Left cardiac atrium (tissue), 4 donors: ENCODE measurements at regions of chr9 and their contacts with region 1.

Region 1: DNA sequence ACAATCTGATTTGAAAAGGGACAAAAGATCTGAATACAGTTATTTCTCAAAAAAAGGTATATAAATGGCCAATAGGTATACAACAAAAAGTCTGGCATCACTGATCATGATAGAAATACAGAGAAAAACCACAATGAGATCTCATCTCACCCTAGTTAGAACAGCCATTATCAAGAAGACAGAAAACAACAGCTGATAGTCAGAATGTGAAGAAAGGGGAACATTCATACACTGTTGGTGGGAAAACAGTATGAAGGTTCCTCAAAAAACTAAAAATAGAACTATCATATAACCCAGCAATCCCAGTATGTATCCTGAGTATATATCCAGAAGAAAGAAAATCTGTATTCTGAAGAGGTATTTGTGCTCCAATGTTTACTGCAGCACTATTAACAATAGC is 75.7 kb upstream of the OR2K2 start:
- DNase-seq: no peak
- ATAC-seq: no peak

Region 2: GRCh38 chr9:111362526-111362925 is 43.2 kb before region 1 on chr9:
- intact Hi-C with region 1: loop called in 1 of 2 experiments (anchors 5 kb)
- DNase-seq: no peak
- ATAC-seq: no peak